Activated B cell treated with CpG ODN at 0.5 μM for 24 hours (primary cell): ENCODE measurements at regions of chr10 and their contacts with region 1.

Region 1: GRCh38 chr10:13371897-13372470 is 23.9 kb upstream of the SEPHS1 start:
- DNase-seq: peak; percentile 33
- ATAC-seq: peak; percentile 97
- H3K4me3 Mint-ChIP-seq: no peak overlapping the region
- H3K27ac Mint-ChIP-seq: no peak overlapping the region
- H3K4me1 Mint-ChIP-seq: no peaks in the 10 kb centered on the region
- H3K27me3 Mint-ChIP-seq: peaks cover 2% of the 10 kb centered on the region
- CTCF ChIP-seq: peak; percentile 77

Region 2: DNA sequence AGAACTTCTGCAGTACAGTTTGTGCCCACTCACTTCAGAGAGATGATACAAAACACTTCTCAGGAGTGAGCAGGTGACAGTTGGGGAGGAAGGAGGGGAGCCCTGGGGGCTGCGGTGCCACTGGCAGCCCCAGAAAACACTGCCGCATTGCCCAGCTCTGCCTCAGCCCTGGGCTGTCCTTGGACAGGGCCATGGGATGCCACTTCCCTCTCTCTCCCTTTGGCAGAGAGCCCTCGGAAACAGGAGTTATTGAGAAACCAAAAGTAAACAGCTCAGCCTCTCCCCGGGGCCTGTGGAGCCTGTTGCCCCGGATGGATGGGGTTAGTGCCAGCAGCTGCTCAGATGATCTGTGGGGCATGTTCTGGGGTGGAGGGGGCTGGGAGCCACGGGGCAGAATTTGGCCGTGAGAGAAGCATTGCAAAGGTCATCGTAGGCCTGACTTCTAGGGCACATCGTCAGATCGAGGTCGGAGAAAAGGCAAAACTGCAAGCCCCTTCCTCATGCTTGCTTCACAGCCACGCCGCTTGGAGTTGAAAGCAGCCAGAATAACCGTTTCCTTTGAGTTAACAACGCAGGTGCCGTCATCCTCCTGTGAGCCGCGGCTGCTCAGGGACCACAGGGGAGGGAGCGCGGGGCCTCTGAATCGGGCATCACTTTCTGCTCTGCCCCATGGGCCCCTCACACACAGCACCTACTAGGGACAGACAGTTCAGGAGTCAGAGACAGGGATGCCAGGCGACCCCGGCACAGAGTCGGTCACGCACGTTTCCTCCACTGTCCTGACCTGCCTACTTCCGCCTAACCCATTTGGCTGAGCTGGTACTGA is 766.2 kb before region 1 on chr10:
- CTCF ChIA-PET with region 1: no interaction called
- POLR2A ChIA-PET with region 1: no interaction called
- intact Hi-C with region 1: no loop called
- DNase-seq: peak; percentile 37
- ATAC-seq: peak; percentile 79
- H3K4me3 Mint-ChIP-seq: peak overlapping the region; percentile 83
- H3K27ac Mint-ChIP-seq: peak overlapping the region; percentile 89
- H3K4me1 Mint-ChIP-seq: peaks cover 29% of the 10 kb centered on the region
- H3K27me3 Mint-ChIP-seq: no peaks in the 10 kb centered on the region
- CTCF ChIP-seq: no peak

Region 3: GRCh38 chr10:13440185-13441061 is 68.4 kb after region 1 on chr10:
- CTCF ChIA-PET with region 1: interaction called, 54 read pairs
- POLR2A ChIA-PET with region 1: interaction called, 3 read pairs
- intact Hi-C with region 1: loop called (anchors 1 kb)
- DNase-seq: peak; percentile 65
- ATAC-seq: peak; percentile 91
- H3K4me3 Mint-ChIP-seq: peak overlapping the region; percentile 64
- H3K27ac Mint-ChIP-seq: no peak overlapping the region
- H3K4me1 Mint-ChIP-seq: peaks cover 11% of the 10 kb centered on the region
- H3K27me3 Mint-ChIP-seq: peaks cover 41% of the 10 kb centered on the region
- CTCF ChIP-seq: peak; percentile 26

Region 4: DNA sequence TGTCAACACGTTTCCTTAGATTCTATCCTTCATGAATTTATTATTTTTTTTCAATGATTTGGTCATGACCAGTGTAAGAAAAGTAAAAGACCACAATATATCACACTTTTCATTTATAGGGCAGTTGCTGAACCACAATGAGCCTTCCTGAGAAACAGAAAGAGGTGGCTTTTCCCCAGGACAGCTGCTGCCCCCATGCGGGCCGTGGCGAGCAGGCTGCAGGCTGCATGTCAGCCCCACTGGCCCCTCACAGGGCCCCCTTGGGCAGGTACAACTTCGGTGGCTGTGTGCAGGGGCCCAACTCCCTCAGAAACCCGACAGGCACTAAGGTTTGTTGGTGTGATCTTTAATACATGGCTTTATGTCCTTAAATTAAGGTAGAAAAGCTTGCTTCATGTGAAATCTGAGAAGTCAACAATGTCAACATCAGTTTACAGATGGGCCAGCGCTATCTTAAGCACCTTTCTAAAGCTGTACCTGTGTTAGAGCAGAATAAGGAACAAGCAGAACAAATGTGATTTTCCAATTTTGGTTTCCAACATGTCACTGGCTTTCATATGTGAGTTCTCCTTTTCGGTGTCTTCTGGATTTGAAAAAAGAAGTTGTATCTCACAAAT is 146.2 kb after region 1 on chr10:
- CTCF ChIA-PET with region 1: no interaction called
- POLR2A ChIA-PET with region 1: no interaction called
- intact Hi-C with region 1: loop called (anchors 5 kb)
- DNase-seq: no peak
- ATAC-seq: no peak
- H3K4me3 Mint-ChIP-seq: no peak overlapping the region
- H3K27ac Mint-ChIP-seq: no peak overlapping the region
- H3K4me1 Mint-ChIP-seq: no peaks in the 10 kb centered on the region
- H3K27me3 Mint-ChIP-seq: peaks cover 12% of the 10 kb centered on the region
- CTCF ChIP-seq: no peak

Region 5: DNA sequence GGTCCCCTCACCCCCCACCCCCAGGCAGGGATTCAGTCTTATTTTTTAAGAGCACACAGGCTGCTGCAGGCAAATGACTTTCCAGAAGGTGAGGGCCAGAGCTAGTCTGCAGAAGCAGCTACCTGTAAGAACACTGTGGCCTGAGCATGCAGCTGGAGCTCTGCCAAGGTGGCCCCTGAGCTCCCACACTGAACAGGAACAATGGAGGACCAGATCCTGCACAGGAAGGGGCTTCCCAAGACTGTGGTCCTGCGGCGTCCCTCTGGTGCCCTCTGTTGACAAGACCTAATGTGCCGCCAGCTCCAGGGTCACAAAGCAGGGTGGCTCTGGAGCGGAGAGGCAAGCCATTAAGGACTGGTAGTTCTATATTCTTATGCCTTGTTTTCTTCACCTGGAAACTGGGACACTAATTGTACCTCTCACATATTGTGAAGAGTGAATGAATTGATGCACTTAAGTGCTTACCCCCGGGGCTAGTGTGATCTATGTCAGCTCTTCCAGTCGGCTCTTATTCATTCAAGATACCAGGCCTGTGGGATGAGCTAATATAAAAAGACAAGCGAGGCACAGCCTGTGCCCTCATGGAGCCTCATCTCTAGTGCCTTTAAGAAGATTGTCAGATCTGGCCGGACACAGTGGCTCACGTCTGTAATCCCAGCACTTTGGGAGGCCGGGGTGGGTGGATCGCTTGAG is 164.8 kb after region 1 on chr10:
- CTCF ChIA-PET with region 1: interaction called, 24 read pairs
- POLR2A ChIA-PET with region 1: no interaction called
- intact Hi-C with region 1: loop called (anchors 1 kb)
- DNase-seq: no peak
- ATAC-seq: peak; percentile 58
- H3K4me3 Mint-ChIP-seq: no peak overlapping the region
- H3K27ac Mint-ChIP-seq: no peak overlapping the region
- H3K4me1 Mint-ChIP-seq: no peaks in the 10 kb centered on the region
- H3K27me3 Mint-ChIP-seq: peaks cover 45% of the 10 kb centered on the region
- CTCF ChIP-seq: no peak